GM10248 (cell line): ENCODE measurements at regions of chr1 and their contacts with region 1.

Region 1: DNA sequence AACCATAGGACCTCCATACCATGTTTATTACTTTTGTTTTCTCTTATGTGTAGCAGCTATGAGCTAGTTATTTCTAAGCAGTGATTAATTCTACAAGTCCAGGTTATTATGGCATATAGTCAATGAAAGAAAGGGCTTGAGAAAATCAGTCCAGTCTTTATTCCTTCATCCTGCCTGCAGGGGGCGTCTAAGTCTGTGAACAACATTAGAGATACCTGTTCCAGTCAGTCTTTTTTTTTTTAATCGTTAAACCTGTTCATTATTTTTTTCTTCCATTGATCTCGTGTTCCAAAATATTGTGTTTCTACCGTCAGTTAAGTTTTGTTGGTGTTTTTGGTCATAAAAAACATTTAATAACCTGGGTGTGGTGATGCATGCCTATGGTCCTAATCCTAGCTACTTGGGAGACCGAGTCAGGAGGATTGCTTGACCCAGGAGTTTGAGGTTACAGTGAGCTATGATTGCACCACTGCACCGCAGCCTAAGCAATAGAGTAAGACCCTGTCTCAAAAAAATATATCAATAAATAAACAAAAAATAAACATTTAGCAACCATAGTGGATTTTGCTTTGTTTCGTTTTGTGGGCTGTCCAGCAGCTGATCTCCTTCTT is 29.4 kb upstream of the CD2 start:
- DNase-seq: peak; percentile 56
- CTCF ChIP-seq: peak; percentile 67

Region 2: GRCh38 chr1:116574581-116575291 is 150.1 kb before region 1 on chr1:
- CTCF ChIA-PET with region 1: interaction called, 10 read pairs
- POLR2A ChIA-PET with region 1: no interaction called
- DNase-seq: peak; percentile 76
- CTCF ChIP-seq: peak; percentile 88

Region 3: GRCh38 chr1:116711263-116711840 is 13.5 kb before region 1 on chr1:
- CTCF ChIA-PET with region 1: interaction called, 21 read pairs
- POLR2A ChIA-PET with region 1: no interaction called
- DNase-seq: no peak
- CTCF ChIP-seq: no peak

Region 4: DNA sequence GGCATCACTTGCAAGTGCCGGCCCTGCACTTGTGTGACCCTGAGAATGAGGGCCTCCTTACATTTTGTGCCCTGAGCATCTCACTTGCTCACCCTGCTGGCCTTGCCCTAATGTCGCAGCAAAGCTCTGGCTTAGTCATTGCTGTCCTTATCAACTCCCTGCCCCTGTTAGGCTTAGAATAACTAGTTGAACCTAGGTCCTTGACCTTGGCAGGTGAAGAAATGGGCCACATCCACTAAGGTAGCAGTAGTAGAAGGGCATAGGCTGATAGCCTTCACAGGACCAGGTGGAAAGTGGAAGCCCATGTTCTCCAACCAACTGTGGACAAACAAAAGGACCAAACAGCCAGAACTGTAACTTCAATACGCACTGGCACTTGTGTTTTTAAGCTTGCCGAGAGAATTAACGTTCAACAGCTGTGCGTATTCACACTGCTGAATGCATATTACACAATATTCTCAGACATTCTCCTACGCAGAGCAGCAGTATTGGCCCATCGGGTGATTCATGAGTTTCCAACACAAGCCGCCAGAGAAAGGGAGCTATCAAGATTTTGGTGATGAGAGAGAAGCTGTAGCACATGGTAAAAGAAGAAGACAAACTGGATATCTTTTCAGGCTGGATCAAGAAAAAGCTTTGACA is 157.1 kb after region 1 on chr1:
- CTCF ChIA-PET with region 1: interaction called, 15 read pairs
- POLR2A ChIA-PET with region 1: no interaction called
- DNase-seq: peak; percentile 44
- CTCF ChIP-seq: peak; percentile 49

Region 5: GRCh38 chr1:117059678-117060440 is 335.0 kb after region 1 on chr1 and contains the start of gene TTF2:
- CTCF ChIA-PET with region 1: interaction called, 22 read pairs
- POLR2A ChIA-PET with region 1: no interaction called
- DNase-seq: peak; percentile 96
- CTCF ChIP-seq: no peak